Thyroid gland (tissue), 4 donors: ENCODE measurements at regions of chr6 and their contacts with region 1.

Region 1: DNA sequence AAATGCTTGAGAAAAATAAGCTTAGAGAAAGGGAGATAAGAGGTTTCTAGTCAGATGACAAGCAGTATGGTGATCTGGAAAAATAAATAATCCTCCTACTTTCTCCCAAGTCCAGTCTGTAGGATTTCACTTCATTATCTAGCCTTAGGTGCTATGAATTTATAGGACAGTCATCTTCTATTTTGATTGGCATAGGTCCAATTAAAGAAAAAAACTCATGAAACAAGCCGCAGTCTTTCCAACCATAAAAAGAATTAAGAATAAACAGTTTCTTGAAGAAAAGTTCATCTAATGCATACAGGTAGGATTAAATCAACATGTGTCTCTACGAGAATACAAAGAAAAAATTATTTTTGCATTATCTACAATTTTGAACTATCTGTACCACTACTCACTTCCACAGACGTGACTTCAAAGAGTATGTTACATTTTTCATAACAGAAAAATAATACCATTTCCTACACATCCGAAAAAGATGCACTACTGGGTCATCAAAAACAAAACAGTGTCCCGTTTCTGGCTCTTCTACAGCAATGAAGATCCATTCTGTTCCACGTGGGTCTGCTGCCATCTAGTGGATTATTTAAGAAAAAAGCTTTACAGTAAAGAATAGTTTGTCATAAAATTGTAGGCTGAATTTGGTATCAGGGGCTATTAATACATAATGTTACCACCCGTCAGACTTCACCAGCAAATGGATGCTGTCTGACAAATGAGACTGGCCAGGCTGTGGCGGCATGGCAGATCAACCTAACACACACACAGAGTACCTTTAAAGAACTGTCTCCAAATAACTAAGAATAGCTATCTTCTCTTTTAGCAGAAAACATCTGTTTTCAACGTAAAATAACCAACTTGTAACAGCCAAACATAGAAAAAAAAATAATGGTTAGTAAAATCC is 28.9 kb downstream of the STX7 start:
- DNase-seq: peak; percentile 14 to 35
- H3K4me3 ChIP-seq: no peak overlapping the region
- H3K27ac ChIP-seq: no peak overlapping the region
- H3K4me1 ChIP-seq: no peaks in the 10 kb centered on the region
- H3K27me3 ChIP-seq: no peaks in the 10 kb centered on the region
- CTCF ChIP-seq: peak; percentile 29 to 78 (median 68)
- POLR2A ChIP-seq: no peak

Region 2: DNA sequence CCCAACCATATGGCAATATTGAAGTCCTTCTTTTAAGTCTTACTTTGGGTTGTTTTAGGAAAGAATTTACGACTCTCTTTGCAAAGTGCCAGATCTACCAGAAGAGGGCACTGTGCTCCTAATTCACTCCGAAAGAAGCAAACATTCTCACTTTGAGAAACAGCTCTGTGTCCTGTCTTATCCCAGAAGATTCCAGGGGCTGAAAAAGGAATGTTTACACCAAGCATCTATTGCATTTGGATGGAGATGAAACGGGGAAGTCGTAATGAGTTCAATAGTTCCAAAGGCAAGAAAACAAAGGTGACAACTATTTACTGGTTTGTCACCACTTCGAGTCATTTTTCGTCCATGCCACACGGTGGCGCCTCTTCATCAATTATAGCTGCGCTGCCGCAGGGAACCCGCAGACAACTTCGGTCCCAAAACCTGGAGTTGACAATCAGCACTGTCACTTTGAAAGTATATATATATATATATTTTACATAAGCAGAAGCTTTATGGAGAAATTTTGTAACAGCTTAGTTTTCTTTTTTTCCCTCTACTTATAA is 204.4 kb before region 1 on chr6:
- intact Hi-C with region 1: loop called (anchors 5 kb)
- DNase-seq: peak; percentile 55 to 75
- H3K4me3 ChIP-seq: peak overlapping the region in 1 of 3 donors; percentile 13
- H3K27ac ChIP-seq: no peak overlapping the region
- H3K4me1 ChIP-seq: no peaks in the 10 kb centered on the region
- H3K27me3 ChIP-seq: no peaks in the 10 kb centered on the region
- CTCF ChIP-seq: peak; percentile 61 to 99 (median 86)
- POLR2A ChIP-seq: no peak